Cardiac septum (tissue), 1 donor: ENCODE measurements at regions of chr7 and their contacts with region 1.

Region 1: DNA sequence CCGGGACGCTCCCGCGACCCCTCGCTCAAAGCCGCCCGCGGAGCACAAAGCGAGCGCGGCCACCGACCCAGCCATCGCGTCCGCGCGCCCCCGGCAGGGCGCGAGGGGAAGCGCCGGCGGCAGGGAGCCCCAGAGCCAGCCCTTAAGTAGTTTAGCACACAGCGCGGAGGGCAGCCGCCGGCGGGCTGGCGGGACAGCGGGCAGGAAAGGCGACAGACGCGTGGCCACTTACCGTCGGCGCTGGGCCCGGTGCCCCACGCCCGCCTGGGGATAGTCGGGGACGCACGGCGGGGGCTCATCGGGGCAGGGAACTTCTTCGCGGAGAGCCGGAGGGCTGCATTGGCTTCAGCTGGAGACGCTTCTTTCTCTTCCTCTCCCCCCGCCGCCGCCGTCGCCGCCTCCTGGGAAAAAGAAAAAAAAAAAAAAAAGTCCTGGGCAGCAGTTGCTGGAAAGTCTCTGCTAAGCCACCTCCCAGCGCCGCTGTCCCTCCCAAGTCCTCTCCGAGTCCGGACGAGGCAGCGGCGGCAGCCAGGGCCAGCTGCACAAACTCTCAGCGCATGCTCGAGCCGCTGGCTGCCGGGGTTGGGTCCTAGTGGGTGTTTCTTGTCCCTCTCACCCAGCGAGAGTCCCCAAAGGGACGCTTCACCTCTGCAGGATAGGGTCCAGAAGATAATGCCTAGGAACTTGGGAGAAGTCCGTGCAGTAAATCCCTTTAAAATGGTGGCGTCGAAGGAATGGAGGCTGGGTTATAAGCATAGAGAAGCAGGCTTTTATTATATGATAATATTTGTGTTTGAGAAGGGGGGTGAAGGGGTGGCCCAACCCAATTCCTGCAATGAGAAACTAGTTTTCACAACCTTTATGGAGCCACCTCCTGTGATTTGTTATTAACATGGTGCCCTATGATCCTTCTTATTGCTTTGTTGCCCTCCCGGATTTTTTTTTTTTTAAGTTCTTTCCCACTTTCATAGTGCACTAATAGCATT is at the start of gene TSPAN12:
- DNase-seq: peak; percentile 92
- total RNA-seq, gene TSPAN12: 54.9 TPM

Region 2: GRCh38 chr7:120185940-120186682 is 671.8 kb before region 1 on chr7:
- intact Hi-C with region 1: no loop called
- DNase-seq: no peak

Region 3: GRCh38 chr7:120805636-120806388 is 52.1 kb before region 1 on chr7:
- intact Hi-C with region 1: loop called (anchors 2 kb)
- DNase-seq: no peak

Region 4: DNA sequence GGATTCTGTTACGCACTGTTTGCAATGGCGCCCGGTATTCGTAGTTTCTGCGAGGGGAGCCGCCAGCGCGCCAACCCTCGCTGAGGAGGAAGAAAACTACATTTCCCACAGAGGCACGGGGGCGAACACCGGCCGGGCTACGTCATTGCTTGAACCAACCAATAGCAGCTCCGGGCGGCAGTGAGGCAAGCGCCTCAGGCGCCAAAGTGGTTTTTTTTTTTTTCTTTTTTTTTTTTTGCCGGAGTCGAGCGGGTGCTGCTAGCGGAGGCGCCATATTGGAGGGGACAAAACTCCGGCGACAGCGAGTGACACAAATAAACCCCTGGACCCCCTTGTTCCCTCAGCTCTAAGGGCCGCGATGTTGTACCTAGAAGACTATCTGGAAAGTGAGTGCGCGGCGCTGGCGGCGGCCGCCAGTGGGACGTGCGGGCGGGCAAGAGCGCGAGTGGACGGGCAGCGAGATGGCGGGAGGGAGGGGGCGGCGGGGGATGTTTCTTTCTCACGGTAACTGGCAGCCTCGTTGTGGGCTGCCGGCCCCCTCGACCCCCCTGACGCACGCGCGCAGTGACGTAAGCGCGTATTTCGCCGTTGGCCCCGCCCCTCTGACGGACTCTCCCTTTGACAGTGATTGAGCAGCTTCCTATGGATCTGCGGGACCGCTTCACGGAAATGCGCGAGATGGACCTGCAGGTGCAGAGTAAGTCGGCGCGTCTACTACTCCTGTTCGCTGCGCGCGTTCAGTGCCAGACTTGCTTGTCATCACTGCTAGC is 92.8 kb after region 1 on chr7 and contains the start of gene ING3:
- intact Hi-C with region 1: loop called (anchors 2 kb)
- DNase-seq: peak; percentile 98
- total RNA-seq, gene ING3: 15.5 TPM

Region 5: DNA sequence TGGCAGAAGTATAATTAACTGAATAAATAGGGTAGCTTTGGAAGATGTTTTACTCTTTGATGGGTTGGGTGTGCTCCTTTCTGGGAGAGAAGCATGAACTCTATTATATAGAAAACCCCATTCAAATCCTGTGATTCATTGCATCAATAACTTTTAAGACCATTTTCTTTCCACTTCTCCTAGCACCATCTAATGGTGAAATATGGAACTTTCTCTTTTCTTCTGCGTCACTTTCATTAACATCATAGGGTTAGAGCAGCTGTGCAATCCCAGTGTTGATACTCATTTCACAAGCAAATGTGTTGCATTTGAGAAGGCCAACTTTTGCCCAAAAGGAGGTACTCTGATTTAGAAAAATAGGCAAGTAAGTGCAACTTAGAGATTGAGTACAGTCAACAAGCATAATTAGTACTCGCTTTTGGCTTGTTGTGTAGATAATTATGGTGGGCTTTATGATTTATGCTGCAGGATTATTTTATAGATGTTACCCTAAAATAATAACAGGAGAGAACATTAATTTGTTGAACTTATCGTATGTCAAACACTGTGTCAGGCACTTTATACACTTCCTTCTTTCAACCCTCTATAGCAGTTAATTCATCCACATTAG is 223.6 kb after region 1 on chr7:
- intact Hi-C with region 1: loop called (anchors 5 kb)
- DNase-seq: no peak